Activated CD4-positive, alpha-beta T cell treated with anti-CD3 and anti-CD28 coated beads, Interleukin-2, amount 10 ng/mL, durations not matched to agents 24 days and 14 days (primary cell): ENCODE measurements at regions of chr12 and their contacts with region 1.

Region 1: DNA sequence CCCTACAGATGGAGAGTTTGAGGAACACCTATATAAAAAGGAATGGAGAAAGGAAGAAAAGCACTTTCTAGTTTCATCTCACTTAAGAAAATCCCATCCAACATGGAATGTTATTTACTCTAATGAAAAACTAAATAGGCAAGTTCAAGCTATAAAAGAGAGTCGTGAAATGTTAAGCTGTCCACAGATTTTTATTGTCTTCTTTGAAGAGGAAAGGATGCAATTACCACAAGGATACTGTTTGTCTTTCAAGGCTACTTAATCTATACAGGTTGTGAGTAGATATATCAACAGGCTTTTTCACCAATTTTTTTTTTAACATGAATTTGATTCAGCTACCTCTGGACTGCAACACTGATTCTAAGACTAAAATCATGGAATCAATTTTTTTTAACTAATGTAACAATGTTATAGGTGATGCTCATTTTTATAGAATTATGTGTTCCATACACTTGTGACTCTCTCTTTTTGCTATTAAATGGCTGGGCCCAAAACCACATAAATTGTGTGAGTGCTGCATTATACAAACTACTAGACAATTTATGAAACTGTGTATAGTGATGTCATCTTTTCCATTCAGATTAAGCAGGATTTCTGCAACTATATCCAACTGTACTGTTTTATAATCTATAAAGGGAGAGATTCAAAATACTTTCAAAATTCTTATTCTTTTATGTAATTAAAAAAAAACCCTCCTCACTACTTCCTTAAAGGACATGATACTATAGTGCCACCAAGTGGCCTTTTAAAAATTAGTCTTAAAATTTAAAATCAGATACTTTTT is 26.8 kb upstream of the BMAL2 start:
- DNase-seq: no peak
- H3K4me3 Mint-ChIP-seq: no peak overlapping the region
- H3K27ac Mint-ChIP-seq: no peak overlapping the region
- H3K4me1 Mint-ChIP-seq: peaks cover 11% of the 10 kb centered on the region
- H3K27me3 Mint-ChIP-seq: no peaks in the 10 kb centered on the region

Region 2: DNA sequence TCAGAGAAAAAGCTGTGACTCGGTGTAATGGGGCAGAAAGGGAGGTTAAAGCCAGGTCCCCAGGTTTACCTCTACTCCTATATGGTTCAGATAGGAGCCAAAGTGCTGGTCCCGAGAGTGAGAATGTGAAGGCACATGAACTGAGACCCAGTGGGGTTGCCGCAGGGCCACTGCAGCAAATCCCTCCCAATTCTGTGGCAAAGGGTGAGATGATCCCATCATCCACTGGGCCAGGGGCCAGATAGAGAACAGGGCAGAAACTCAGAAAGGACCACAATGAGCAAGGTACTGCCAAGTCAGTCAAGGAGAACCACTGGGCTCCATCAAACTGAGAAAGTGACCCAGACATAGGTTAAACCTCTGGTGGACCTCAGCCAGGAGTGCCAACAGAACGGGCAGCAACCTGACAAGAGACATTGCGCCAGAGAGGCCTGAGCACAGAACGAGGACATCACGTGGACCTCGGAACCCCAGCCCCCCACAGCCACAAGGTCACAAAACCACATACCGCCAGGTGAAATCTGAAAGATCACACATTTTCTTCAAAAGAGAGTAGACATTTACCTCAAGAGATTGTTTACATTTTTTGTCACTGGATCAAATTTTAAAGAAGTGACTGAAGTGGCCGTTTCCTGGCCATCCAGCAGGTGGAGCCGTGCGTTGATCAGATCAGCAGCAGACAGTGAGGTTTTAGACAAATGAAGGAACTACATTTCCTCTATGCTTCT is 452.4 kb before region 1 on chr12:
- intact Hi-C with region 1: loop called (anchors 5 kb)
- DNase-seq: peak; percentile 90
- H3K4me3 Mint-ChIP-seq: no peak overlapping the region
- H3K27ac Mint-ChIP-seq: no peak overlapping the region
- H3K4me1 Mint-ChIP-seq: no peaks in the 10 kb centered on the region
- H3K27me3 Mint-ChIP-seq: peaks cover 10% of the 10 kb centered on the region

Region 3: DNA sequence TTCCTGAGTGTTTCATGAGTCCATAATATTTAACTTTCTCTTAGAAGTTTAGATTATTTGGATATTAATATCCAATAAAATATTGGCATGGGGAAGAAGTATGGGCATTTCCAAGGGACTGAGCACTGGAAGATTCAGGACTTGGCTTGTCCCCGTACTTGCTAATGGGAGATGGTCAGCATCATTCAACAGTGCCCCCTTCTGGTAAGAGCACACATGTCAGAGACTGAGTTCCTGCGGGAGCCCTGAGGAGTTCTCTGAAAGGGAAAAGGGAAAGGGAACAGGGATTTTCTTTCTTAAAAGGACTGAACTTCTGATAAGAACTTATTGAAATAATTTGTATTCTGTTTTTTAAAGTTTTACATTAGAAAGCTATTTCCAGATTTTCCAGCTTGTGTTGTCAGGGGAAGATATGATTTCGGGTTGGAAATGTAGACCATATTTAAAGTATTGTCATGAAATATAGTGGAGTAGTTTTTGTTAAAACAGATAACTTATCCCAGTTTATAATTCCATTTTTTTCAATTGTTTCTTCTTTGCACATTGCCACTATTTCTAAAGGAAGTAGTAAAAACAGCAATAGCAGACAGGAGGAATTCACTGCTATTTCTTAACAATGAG is 163.7 kb before region 1 on chr12:
- intact Hi-C with region 1: loop called (anchors 1 kb)
- DNase-seq: peak; percentile 81
- H3K4me3 Mint-ChIP-seq: no peak overlapping the region
- H3K27ac Mint-ChIP-seq: peak overlapping the region; percentile 1
- H3K4me1 Mint-ChIP-seq: peaks cover 17% of the 10 kb centered on the region
- H3K27me3 Mint-ChIP-seq: peaks cover 2% of the 10 kb centered on the region